PC-9 (cell line): ENCODE measurements at regions of chr19 and their contacts with region 1.

Region 1: DNA sequence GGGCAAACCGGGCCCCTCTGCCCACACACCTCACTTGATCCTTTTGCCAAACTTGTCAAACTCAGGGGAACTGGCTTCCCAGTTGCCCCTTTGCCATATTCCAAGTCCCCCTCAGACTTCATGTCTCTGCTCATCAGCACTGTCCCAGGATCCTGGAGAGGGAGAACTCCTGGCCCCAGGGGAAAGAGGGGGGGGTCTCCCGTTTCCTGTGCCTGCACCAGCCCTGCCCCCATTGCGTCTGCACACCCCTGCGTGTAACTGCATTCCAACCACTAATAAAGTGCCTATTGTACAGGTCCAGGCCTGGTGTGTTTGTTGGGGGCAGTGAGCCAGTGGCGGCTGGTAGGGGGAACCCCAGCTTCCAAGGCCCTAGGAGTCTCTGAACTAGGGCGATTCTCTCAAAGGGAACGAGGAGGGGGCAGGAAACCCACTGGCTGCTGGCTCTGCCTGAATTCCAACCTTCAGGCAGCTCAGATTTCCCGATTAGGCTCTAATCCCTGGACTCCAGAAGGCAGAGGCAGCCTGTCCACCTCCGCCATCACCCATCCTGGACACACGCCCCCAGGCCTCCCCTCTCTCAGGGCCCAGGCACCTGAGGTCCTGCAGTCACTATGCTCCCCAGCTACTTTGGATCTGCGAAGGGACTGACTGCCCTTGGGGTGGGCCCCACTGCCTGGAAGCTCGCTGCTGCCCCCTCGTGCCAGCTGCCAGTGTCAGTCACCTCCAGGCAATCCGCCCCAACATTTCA is 9.7 kb upstream of the ILF3 start:
- DNase-seq: peak; percentile 73 to 85
- H3K4me3 ChIP-seq: no peak overlapping the region
- H3K27ac ChIP-seq: no peak overlapping the region; the same call in 1 of the 2 replicates
- H3K4me1 ChIP-seq: no peaks in the 10 kb centered on the region
- H3K27me3 ChIP-seq: no peaks in the 10 kb centered on the region
- CTCF ChIP-seq: peak; percentile 95

Region 2: DNA sequence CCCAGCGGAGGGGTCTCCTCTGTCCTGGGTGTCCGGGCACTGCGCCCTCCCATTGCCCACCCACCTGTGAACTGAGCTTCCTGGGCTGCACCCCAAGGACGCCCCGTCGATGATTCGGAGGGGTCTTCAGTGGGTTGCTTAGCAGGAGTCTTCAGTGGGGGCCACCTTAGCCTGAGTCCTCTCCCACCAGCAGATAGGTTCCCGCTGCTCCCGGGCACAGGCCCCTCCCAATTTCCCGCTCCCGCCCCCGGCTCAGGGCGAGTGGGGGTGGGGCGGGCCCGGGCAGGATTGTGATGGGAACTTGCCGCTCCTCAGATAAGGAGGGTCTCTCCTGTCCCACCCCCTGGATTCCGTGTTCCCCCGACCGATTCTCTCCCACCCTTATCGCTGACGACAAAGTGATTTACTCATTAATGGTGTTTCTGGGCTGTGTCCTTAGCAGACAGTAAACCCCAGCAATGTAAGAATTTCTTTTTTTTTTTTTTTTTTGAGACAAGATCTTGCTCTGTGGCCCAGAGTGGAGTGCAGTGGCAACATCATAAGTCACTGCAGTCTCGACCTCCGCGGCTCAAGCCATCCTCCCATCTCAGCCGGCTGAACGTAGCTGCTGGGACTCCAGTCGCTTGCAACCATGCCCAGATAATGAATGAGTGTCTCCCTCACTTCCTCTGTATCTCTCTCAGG is 126.5 kb before region 1 on chr19:
- CTCF ChIA-PET with region 1: no interaction called
- POLR2A ChIA-PET with region 1: interaction called, 20 read pairs
- intact Hi-C with region 1: no loop called
- DNase-seq: peak in 1 of 2 experiments; percentile 65
- H3K4me3 ChIP-seq: peak overlapping the region; percentile 82
- H3K27ac ChIP-seq: no peak overlapping the region
- H3K4me1 ChIP-seq: peaks cover 28% of the 10 kb centered on the region
- H3K27me3 ChIP-seq: peaks cover 4% of the 10 kb centered on the region; the same call in 1 of the 2 replicates
- CTCF ChIP-seq: no peak

Region 3: GRCh38 chr19:10580979-10581631 is 63.3 kb before region 1 on chr19:
- CTCF ChIA-PET with region 1: interaction called, 35 read pairs
- POLR2A ChIA-PET with region 1: interaction called, 3 read pairs
- intact Hi-C with region 1: loop called (anchors 1 kb)
- DNase-seq: peak; percentile 82 to 89
- H3K4me3 ChIP-seq: no peak overlapping the region
- H3K27ac ChIP-seq: no peak overlapping the region
- H3K4me1 ChIP-seq: peaks cover 8% of the 10 kb centered on the region; the same call in 1 of the 2 replicates
- H3K27me3 ChIP-seq: no peaks in the 10 kb centered on the region
- CTCF ChIP-seq: peak; percentile 99

Region 4: GRCh38 chr19:10587022-10587789 is 57.2 kb before region 1 on chr19 and contains the start of gene AP1M2:
- CTCF ChIA-PET with region 1: interaction called, 35 read pairs
- POLR2A ChIA-PET with region 1: interaction called, 29 read pairs
- intact Hi-C with region 1: no loop called
- DNase-seq: peak; percentile 60 to 77
- H3K4me3 ChIP-seq: peak within 1 kb of the TSS; percentile 86
- H3K27ac ChIP-seq: peak within 1 kb of the TSS; percentile 58
- H3K4me1 ChIP-seq: peaks cover 8% of the 10 kb centered on the region; the same call in 1 of the 2 replicates
- H3K27me3 ChIP-seq: no peaks in the 10 kb centered on the region
- CTCF ChIP-seq: no peak
- total RNA-seq, gene AP1M2: 94.5 and 126 TPM in 2 replicates

Region 5: DNA sequence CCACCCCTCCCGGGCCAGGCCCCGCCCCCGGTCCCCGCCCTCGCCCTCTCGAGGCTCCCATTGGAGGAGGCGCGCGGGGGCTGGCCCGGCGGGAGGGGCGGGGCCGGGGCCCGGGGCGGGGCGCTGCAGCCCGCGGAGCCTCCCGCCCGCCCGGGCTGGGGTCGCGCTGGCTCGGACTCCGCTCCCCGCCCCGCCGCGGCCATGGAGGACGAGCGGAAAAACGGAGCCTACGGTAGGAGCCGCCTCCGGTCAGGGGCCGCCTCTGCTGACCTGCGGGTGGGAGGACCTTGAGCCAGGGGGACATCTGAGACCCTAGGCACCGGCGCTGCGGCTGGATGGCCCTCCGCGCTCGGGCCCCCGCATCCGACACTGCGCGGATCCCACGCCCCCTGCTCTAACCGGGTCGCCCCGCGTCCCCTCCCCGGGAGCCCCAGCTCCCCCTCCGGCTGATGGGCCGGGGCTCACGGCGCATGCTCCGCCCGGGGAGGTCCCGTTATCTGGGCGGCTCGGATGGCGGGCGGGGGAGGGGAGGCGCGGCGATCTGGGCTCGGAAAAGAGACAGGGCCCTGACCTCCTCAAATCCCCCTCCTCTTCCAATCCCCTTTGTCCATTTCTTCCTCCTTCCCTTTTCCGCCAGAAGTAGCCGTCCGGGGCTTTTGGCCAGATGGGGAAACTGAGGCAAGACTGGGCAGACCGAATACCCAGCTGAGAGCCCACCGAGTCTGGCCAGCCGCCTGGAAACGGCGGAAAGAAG is 41.9 kb before region 1 on chr19:
- CTCF ChIA-PET with region 1: interaction called, 15 read pairs
- POLR2A ChIA-PET with region 1: interaction called, 7 read pairs
- intact Hi-C with region 1: no loop called
- DNase-seq: peak; percentile 58 to 77
- H3K4me3 ChIP-seq: peak overlapping the region; percentile 93
- H3K27ac ChIP-seq: peak overlapping the region; percentile 90
- H3K4me1 ChIP-seq: peaks cover 31% of the 10 kb centered on the region
- H3K27me3 ChIP-seq: no peaks in the 10 kb centered on the region
- CTCF ChIP-seq: no peak

Region 6: DNA sequence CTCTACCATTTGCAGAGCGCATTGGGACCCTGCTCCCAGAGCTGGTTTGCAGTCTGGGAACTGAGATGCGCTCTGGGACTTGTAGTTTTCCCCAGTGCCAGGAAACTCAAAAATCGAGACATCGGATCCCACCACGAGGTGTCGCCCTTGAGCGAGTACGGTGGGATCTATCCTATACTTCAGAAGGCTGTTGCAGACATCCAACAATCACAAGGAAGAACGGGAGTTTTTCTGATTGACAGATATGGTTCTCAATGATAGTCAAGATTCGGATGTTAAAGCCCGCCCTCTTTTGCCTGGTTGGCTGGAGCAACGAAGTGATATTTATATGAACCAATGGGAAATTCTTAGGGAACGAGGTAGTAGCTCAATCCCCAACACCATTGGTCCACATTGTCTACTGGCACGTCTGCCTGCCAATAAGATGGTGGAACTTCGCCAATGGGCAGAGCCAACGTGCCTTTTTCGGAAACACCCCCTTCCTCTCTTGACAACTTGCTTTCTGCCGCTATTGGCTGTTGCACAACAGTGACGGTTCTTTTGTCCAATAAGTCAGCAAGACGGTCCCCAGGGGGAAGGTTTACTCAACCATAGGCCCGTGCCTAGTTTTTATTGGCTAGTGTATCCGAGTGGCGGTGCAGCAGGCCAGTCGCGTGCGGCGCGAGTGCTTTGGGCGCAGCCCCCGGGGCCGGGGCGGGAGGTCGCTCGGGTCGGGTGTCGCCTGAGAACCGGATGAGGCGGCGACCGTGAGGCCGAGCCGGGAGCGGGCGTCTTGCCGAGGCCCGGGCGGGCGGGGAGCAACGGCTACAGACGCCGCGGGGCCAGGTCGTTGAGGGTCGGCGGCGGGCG is 73.1 kb after region 1 on chr19 and contains the start of gene DNM2:
- CTCF ChIA-PET with region 1: no interaction called
- POLR2A ChIA-PET with region 1: no interaction called
- intact Hi-C with region 1: no loop called
- DNase-seq: peak; percentile 99 to 100
- H3K4me3 ChIP-seq: peak within 1 kb of the TSS; percentile 95
- H3K27ac ChIP-seq: no peak within 1 kb of the TSS
- H3K4me1 ChIP-seq: peaks cover 12% of the 10 kb centered on the region
- H3K27me3 ChIP-seq: no peaks in the 10 kb centered on the region
- CTCF ChIP-seq: peak; percentile 87
- total RNA-seq, gene DNM2: 169 and 188 TPM in 2 replicates

Region 7: GRCh38 chr19:10848230-10848856 is 203.9 kb after region 1 on chr19 and contains the start of gene C19orf38:
- CTCF ChIA-PET with region 1: no interaction called
- POLR2A ChIA-PET with region 1: no interaction called
- intact Hi-C with region 1: no loop called
- DNase-seq: peak in 1 of 2 experiments; percentile 21
- H3K4me3 ChIP-seq: no peak within 1 kb of the TSS
- H3K27ac ChIP-seq: no peak within 1 kb of the TSS
- H3K4me1 ChIP-seq: no peaks in the 10 kb centered on the region
- H3K27me3 ChIP-seq: no peaks in the 10 kb centered on the region
- CTCF ChIP-seq: no peak
- total RNA-seq, gene C19orf38: 0.59 and 1.4 TPM in 2 replicates

Region 8: DNA sequence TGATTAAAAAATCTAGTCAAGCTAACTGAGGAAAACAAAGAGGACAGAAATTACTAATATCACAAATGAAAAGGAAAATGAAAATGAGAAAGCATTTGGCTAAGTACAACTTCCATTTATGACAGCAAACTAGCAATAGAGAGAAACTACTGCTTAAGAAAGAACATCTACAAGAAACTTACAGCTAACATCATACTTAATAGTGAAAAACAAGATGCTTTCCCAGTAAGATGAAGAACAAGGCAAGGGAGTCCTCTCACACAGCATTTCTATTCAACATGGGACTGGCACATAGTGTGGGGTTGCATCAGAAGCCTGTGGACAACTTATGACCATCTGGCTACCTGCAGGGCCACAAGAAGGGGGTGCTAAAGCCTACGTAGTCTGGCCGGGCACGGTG is 1610.9 kb after region 1 on chr19:
- CTCF ChIA-PET with region 1: no interaction called
- POLR2A ChIA-PET with region 1: interaction called, 25 read pairs
- intact Hi-C with region 1: no loop called
- DNase-seq: no peak
- H3K4me3 ChIP-seq: no peak overlapping the region
- H3K27ac ChIP-seq: no peak overlapping the region
- H3K4me1 ChIP-seq: no peaks in the 10 kb centered on the region
- H3K27me3 ChIP-seq: no peaks in the 10 kb centered on the region
- CTCF ChIP-seq: no peak